ENCODE measurements at regions of chr22 and their contacts with region 1.

Region 1: GRCh38 chr22:38569972-38570778 is at the start of gene DMC1:
- DNase-seq: peak; percentile 94
- ATAC-seq: peak; percentile 99
- total RNA-seq, gene DMC1: 0.20 TPM

Region 2: GRCh38 chr22:38051900-38052862 is 518.0 kb before region 1 on chr22:
- intact Hi-C with region 1: loop called (anchors 10 kb)
- DNase-seq: peak; percentile 89
- ATAC-seq: peak; percentile 77

Region 3: GRCh38 chr22:38506118-38506962 is 63.8 kb before region 1 on chr22 and contains the start of gene DDX17:
- intact Hi-C with region 1: loop called (anchors 5 kb)
- DNase-seq: peak; percentile 94
- ATAC-seq: peak; percentile 85
- total RNA-seq, gene DDX17: 212 TPM

Measured in left ventricle myocardium superior (tissue), 1 donor.